Activated CD4-positive, alpha-beta memory T cell treated with anti-CD3 and anti-CD28 coated beads, Interleukin-2, amount 10 ng/mL, durations not matched to agents 7 days and 5 days (primary cell): ENCODE measurements at regions of chr11 and their contacts with region 1.

Region 1: GRCh38 chr11:85752890-85753581 is 57.9 kb downstream of the SYTL2 start:
- DNase-seq: peak; percentile 94
- H3K4me3 Mint-ChIP-seq: peak overlapping the region; percentile 58
- H3K27ac Mint-ChIP-seq: peak overlapping the region; percentile 94
- H3K4me1 Mint-ChIP-seq: peaks cover 96% of the 10 kb centered on the region
- H3K27me3 Mint-ChIP-seq: no peaks in the 10 kb centered on the region

Region 2: DNA sequence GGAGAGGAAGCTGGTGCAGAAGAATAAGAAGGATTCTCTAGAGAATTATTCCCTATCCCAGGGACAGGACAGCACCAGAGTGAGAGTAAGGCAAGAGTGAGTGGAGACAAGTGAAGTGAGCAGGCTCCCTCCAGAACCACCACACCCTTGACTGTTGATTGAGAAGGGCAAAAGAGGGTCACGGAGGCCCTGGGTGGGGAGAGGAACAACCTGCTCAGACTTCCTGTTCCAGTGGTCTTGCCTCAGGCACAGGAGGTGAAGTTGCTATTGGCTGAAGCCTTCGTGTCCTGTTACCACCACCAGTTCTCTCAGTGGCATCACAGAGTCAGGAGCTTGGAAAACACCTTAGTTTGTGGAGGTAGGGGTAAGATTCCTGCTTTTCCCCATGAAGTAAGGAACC is 15.3 kb before region 1 on chr11:
- CTCF ChIA-PET with region 1: interaction called, 3 read pairs
- POLR2A ChIA-PET with region 1: interaction called, 15 read pairs
- DNase-seq: peak; percentile 43
- H3K4me3 Mint-ChIP-seq: no peak overlapping the region
- H3K27ac Mint-ChIP-seq: peak overlapping the region; percentile 27
- H3K4me1 Mint-ChIP-seq: peaks cover 34% of the 10 kb centered on the region
- H3K27me3 Mint-ChIP-seq: no peaks in the 10 kb centered on the region

Region 3: DNA sequence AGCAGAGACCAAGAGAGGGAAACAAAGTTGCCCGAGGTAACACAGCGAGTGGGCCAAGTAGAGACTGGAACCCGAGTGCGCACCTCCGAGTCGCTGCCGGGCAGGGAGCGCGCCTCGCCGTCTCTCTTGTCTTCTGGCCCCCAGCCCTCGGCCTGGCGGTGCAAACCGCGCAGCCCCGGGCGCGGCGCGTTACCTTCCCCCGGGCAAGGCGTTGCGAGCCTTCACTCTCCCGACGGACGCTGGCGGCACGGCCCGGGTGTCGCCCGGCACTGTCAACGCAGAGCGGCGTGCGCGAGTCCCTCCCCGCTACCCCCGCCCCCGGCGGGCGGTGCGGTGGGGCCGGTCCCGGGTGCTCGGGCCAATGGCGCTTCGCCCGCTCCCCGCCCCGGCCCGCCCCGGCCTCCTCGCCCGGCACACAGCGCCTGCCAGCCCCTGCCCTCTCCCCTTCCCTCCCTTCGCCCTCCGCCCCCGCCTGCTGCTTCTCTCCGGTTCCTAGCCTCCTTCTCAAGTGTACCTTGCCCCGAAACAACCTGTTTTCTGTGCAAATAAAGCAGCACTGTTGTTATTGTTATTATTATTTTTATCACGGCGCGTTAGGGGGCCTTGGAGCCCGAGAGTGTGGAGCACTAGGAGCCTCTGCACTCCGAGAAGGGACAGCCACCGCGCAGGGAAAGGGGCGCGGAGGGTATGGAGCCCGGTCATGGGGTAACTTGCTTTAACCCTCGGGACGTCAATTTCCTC is 58.0 kb after region 1 on chr11 and contains the start of gene SYTL2:
- CTCF ChIA-PET with region 1: interaction called, 3 read pairs
- POLR2A ChIA-PET with region 1: interaction called, 10 read pairs
- DNase-seq: peak; percentile 83
- H3K4me3 Mint-ChIP-seq: peak within 1 kb of the TSS; percentile 86
- H3K27ac Mint-ChIP-seq: peak within 1 kb of the TSS; percentile 47
- H3K4me1 Mint-ChIP-seq: peaks cover 46% of the 10 kb centered on the region
- H3K27me3 Mint-ChIP-seq: peaks cover 7% of the 10 kb centered on the region
- total RNA-seq, gene SYTL2: 93.0 to 99.2 TPM